Left ventricle myocardium superior (tissue), 1 donor: ENCODE measurements at regions of chr6 and their contacts with region 1.

Region 1: GRCh38 chr6:2245094-2245876 is at the start of gene GMDS:
- DNase-seq: peak; percentile 94
- ATAC-seq: peak; percentile 100
- total RNA-seq, gene GMDS: 6.4 TPM

Region 2: GRCh38 chr6:2626401-2626800 is 381.1 kb after region 1 on chr6:
- intact Hi-C with region 1: loop called (anchors 5 kb)
- DNase-seq: no peak
- ATAC-seq: no peak